ENCODE measurements at regions of chr2 and their contacts with region 1.

Region 1: GRCh38 chr2:105468582-105469042 is 69.8 kb upstream of the FHL2 start:
- DNase-seq: no peak
- H3K4me3 ChIP-seq: no peak overlapping the region
- H3K27ac ChIP-seq: no peak overlapping the region
- H3K4me1 ChIP-seq: peaks cover 7% of the 10 kb centered on the region
- H3K27me3 ChIP-seq: no peaks in the 10 kb centered on the region
- CTCF ChIP-seq: no peak

Region 2: GRCh38 chr2:105403785-105404698 is 64.6 kb before region 1 on chr2:
- CTCF ChIA-PET with region 1: no interaction called
- dilution Hi-C with region 1: no loop called
- in situ Hi-C with region 1: no loop called
- intact Hi-C with region 1: no loop called
- DNase-seq: peak; percentile 99
- H3K4me3 ChIP-seq: peak overlapping the region in 2 of 3 experiments; percentile 2 to 11
- H3K27ac ChIP-seq: peak overlapping the region; percentile 96
- H3K4me1 ChIP-seq: peaks cover 64% of the 10 kb centered on the region
- H3K27me3 ChIP-seq: no peaks in the 10 kb centered on the region
- CTCF ChIP-seq: peak in 1 of 2 donors; percentile 61

Region 3: DNA sequence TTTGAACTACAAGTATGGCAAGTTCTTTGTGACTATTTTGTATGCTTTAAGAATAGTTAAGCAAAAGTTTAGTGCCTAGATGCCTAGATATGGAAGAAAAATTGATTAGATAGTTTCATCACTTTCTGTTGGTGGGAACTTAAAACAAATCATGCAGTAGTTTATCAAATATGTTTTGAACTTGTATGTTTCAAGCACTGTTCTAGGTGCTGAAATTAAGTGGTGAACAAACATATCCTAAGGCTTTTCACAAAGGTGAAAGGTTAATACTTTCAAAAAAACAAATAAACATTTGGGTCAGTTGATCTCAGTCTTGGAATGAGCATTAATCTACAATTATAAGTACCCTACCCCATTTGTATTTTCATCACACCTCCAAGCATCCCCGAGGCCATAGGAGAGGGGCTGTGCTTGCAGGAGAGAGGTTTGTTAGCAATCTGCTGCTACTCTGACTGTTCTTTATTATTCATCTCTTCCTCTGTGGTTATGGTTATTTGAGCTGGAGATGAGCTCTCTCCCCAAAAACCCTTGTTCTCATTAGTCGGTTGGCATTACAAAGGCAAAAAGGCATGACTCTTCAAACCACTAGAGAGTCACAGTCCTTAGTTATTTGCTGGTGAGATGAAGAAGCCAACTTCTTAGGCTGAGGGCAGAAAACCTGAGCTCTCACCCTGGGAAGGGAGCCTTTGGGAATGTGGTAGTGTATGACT is 34.2 kb after region 1 on chr2:
- CTCF ChIA-PET with region 1: no interaction called
- dilution Hi-C with region 1: no loop called
- in situ Hi-C with region 1: no loop called
- intact Hi-C with region 1: loop called (anchors 5 kb)
- DNase-seq: peak; percentile 51
- H3K4me3 ChIP-seq: no peak overlapping the region
- H3K27ac ChIP-seq: no peak overlapping the region
- H3K4me1 ChIP-seq: no peaks in the 10 kb centered on the region
- H3K27me3 ChIP-seq: no peaks in the 10 kb centered on the region
- CTCF ChIP-seq: no peak

Region 4: GRCh38 chr2:105866216-105867185 is 397.9 kb after region 1 on chr2:
- CTCF ChIA-PET with region 1: no interaction called
- dilution Hi-C with region 1: no loop called
- in situ Hi-C with region 1: no loop called
- intact Hi-C with region 1: no loop called
- DNase-seq: peak; percentile 11
- H3K4me3 ChIP-seq: no peak overlapping the region
- H3K27ac ChIP-seq: no peak overlapping the region
- H3K4me1 ChIP-seq: peaks cover 6% of the 10 kb centered on the region
- H3K27me3 ChIP-seq: no peaks in the 10 kb centered on the region
- CTCF ChIP-seq: no peak

Measured in mammary epithelial cell (primary cell).